Natural killer cell (primary cell): ENCODE measurements at regions of chr1 and their contacts with region 1.

Region 1: DNA sequence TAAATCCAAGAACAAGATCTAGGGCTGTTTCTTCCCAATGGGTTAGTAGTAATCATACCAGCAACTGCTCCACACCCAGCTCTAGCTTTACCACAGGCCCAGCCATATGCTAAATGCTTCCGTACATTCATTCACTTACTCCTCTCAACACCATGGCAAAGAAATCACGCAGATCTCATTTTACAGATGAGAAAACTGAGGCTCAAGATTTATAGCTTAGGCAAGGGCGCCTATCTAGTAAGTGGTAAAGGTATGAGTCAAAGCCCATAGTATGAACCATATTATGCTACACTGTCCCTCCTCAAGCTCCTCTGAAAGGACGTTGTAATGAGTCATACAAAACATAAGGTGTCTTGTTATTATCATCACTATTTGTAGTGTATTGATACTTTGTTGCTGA is 82.2 kb downstream of the NIBAN1 start:
- DNase-seq: peak in 1 of 2 donors; percentile 47
- ATAC-seq: peak in 2 of 3 donors; percentile 14 to 38
- H3K4me3 ChIP-seq: no peak overlapping the region
- H3K4me3 Mint-ChIP-seq: no peak overlapping the region
- H3K27ac ChIP-seq: peak overlapping the region; percentile 6
- H3K27ac Mint-ChIP-seq: peak overlapping the region in 1 of 2 donors; percentile 90
- H3K4me1 ChIP-seq: peaks cover 5% of the 10 kb centered on the region
- H3K4me1 Mint-ChIP-seq: peaks cover 17 to 19% of the 10 kb centered on the region in 2 donors
- H3K27me3 ChIP-seq: no peaks in the 10 kb centered on the region
- H3K27me3 Mint-ChIP-seq: no peaks in the 10 kb centered on the region
- CTCF ChIP-seq: no peak

Region 2: GRCh38 chr1:184691719-184692324 is 200.3 kb before region 1 on chr1:
- intact Hi-C with region 1: no loop called
- DNase-seq: peak in 1 of 2 donors; percentile 25
- ATAC-seq: no peak
- H3K4me3 ChIP-seq: no peak overlapping the region
- H3K4me3 Mint-ChIP-seq: no peak overlapping the region
- H3K27ac ChIP-seq: no peak overlapping the region
- H3K27ac Mint-ChIP-seq: no peak overlapping the region
- H3K4me1 ChIP-seq: no peaks in the 10 kb centered on the region
- H3K4me1 Mint-ChIP-seq: no peaks in the 10 kb centered on the region
- H3K27me3 ChIP-seq: no peaks in the 10 kb centered on the region
- H3K27me3 Mint-ChIP-seq: no peaks in the 10 kb centered on the region
- CTCF ChIP-seq: peak; percentile 34

Region 3: GRCh38 chr1:184843732-184844495 is 48.2 kb before region 1 on chr1:
- intact Hi-C with region 1: loop called (anchors 10 kb)
- DNase-seq: peak; percentile 66 to 88
- ATAC-seq: peak; percentile 51 to 71 (median 65)
- H3K4me3 ChIP-seq: no peak overlapping the region
- H3K4me3 Mint-ChIP-seq: peak overlapping the region; percentile 54
- H3K27ac ChIP-seq: peak overlapping the region; percentile 61
- H3K27ac Mint-ChIP-seq: peak overlapping the region; percentile 80 to 84
- H3K4me1 ChIP-seq: peaks cover 22% of the 10 kb centered on the region
- H3K4me1 Mint-ChIP-seq: peaks cover 32 to 38% of the 10 kb centered on the region in 2 donors
- H3K27me3 ChIP-seq: no peaks in the 10 kb centered on the region
- H3K27me3 Mint-ChIP-seq: no peaks in the 10 kb centered on the region
- CTCF ChIP-seq: no peak